ENCODE measurements at regions of chr3 and their contacts with region 1.

Region 1: GRCh38 chr3:30611613-30612436 is 5.4 kb downstream of the TGFBR2 start:
- DNase-seq: no peak
- H3K4me3 Mint-ChIP-seq: peak overlapping the region; percentile 86
- H3K27ac Mint-ChIP-seq: peak overlapping the region; percentile 96
- H3K4me1 Mint-ChIP-seq: peaks cover 72% of the 10 kb centered on the region
- H3K27me3 Mint-ChIP-seq: no peaks in the 10 kb centered on the region

Region 2: GRCh38 chr3:30597131-30597768 is 14.6 kb before region 1 on chr3:
- CTCF ChIA-PET with region 1: no interaction called
- POLR2A ChIA-PET with region 1: no interaction called
- intact Hi-C with region 1: no loop called
- DNase-seq: no peak
- H3K4me3 Mint-ChIP-seq: no peak overlapping the region
- H3K27ac Mint-ChIP-seq: no peak overlapping the region
- H3K4me1 Mint-ChIP-seq: peaks cover 17% of the 10 kb centered on the region
- H3K27me3 Mint-ChIP-seq: no peaks in the 10 kb centered on the region

Region 3: DNA sequence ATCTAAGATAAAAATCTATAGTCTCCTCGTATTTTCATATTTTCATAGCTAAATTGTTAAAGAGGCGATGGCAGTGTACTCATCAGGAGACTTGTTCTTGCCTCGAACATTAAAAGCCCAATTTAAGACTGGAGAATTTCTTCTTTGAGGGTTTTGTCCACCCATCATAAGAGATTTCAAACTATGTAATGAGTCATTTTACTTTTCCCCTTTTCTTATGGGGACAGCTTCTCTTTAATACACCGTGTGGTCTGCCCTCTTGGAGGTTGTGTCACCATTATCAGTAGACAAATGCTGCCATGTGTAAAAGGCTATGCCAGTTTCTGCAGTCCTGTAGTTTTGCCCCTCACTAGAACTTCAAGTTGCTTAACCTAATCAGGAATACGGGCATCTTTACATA is 11.5 kb after region 1 on chr3:
- CTCF ChIA-PET with region 1: interaction called, 9 read pairs
- POLR2A ChIA-PET with region 1: interaction called, 182 read pairs
- intact Hi-C with region 1: loop called (anchors 1 kb)
- DNase-seq: no peak
- H3K4me3 Mint-ChIP-seq: peak overlapping the region; percentile 59
- H3K27ac Mint-ChIP-seq: peak overlapping the region; percentile 96
- H3K4me1 Mint-ChIP-seq: peaks cover 91% of the 10 kb centered on the region
- H3K27me3 Mint-ChIP-seq: no peaks in the 10 kb centered on the region

Region 4: GRCh38 chr3:30634761-30635735 is 23.2 kb after region 1 on chr3:
- CTCF ChIA-PET with region 1: interaction called, 12 read pairs
- POLR2A ChIA-PET with region 1: interaction called, 19 read pairs
- intact Hi-C with region 1: loop called (anchors 1 kb)
- DNase-seq: no peak
- H3K4me3 Mint-ChIP-seq: peak overlapping the region; percentile 45
- H3K27ac Mint-ChIP-seq: peak overlapping the region; percentile 91
- H3K4me1 Mint-ChIP-seq: peaks cover 89% of the 10 kb centered on the region
- H3K27me3 Mint-ChIP-seq: no peaks in the 10 kb centered on the region

Region 5: GRCh38 chr3:30658328-30659052 is 46.7 kb after region 1 on chr3:
- CTCF ChIA-PET with region 1: interaction called, 13 read pairs
- POLR2A ChIA-PET with region 1: interaction called, 140 read pairs
- intact Hi-C with region 1: loop called (anchors 1 kb)
- DNase-seq: peak; percentile 72
- H3K4me3 Mint-ChIP-seq: peak overlapping the region; percentile 68
- H3K27ac Mint-ChIP-seq: peak overlapping the region; percentile 85
- H3K4me1 Mint-ChIP-seq: peaks cover 98% of the 10 kb centered on the region
- H3K27me3 Mint-ChIP-seq: no peaks in the 10 kb centered on the region

Region 6: GRCh38 chr3:31247850-31248562 is 636.2 kb after region 1 on chr3:
- CTCF ChIA-PET with region 1: no interaction called
- POLR2A ChIA-PET with region 1: no interaction called
- intact Hi-C with region 1: loop called (anchors 5 kb)
- DNase-seq: peak; percentile 58
- H3K4me3 Mint-ChIP-seq: no peak overlapping the region
- H3K27ac Mint-ChIP-seq: peak overlapping the region; percentile 67
- H3K4me1 Mint-ChIP-seq: peaks cover 50% of the 10 kb centered on the region
- H3K27me3 Mint-ChIP-seq: no peaks in the 10 kb centered on the region

Measured in activated CD4-positive, alpha-beta memory T cell treated with anti-CD3 and anti-CD28 coated beads for 36 hours (primary cell).